Mammary epithelial cell (primary cell): ENCODE measurements at regions of chr9 and their contacts with region 1.

Region 1: GRCh38 chr9:90659650-90660364 is 17.2 kb upstream of the DIRAS2 start:
- DNase-seq: peak; percentile 85
- H3K4me3 ChIP-seq: no peak overlapping the region
- H3K27ac ChIP-seq: no peak overlapping the region
- H3K4me1 ChIP-seq: peaks cover 8% of the 10 kb centered on the region
- H3K27me3 ChIP-seq: peaks cover 9% of the 10 kb centered on the region
- CTCF ChIP-seq: no peak

Region 2: DNA sequence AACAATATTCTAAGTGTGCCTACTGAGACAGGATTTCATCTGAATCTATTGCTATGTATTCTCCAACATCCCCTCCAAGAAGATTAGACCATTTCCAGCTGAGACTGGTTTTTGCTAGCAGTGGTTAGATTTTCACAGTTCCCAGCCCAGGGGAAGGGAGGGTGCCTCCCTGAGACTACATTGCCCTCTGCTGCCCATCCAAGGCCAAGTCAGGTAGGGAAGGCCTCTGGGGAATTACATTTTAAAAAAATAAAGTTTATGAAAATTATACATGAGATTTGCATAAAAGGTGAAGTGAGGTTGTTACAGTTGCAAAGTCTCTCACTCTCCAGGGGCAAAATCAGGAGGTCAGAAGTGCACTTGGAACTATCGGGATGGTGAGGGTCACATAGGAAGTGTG is 113.8 kb after region 1 on chr9:
- CTCF ChIA-PET with region 1: no interaction called
- dilution Hi-C with region 1: no loop called
- in situ Hi-C with region 1: loop called in 1 of 2 experiments (anchors 25 kb)
- intact Hi-C with region 1: no loop called
- DNase-seq: peak; percentile 9
- H3K4me3 ChIP-seq: no peak overlapping the region
- H3K27ac ChIP-seq: no peak overlapping the region
- H3K4me1 ChIP-seq: peaks cover 3% of the 10 kb centered on the region
- H3K27me3 ChIP-seq: no peaks in the 10 kb centered on the region
- CTCF ChIP-seq: peak; percentile 47 to 61